CD4-positive, alpha-beta memory T cell (primary cell): ENCODE measurements at regions of chrX and their contacts with region 1.

Region 1: DNA sequence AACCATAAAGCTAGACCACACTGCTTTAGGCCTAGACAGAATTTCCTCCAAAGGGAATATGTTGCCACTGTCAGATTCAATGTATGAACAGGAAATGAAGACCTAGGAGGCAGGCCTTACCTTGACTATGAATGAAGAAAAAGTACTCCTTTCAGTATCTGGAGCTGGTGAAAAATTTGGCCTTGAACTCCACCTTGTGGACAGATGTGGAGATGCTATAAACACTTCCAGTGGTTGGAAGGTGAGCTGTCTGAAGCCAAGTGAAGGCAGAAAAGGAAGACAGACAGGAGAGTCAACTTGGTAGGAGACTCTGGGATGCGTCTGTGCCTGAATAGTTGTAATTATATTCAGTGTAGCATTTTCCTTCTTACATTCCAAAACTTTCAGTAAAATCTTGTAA is 17.2 kb downstream of the SPIN3 start:
- DNase-seq: peak; percentile 51 to 60 (median 59)
- H3K4me3 ChIP-seq: no peak overlapping the region
- H3K4me3 Mint-ChIP-seq: no peak overlapping the region
- H3K27ac ChIP-seq: no peak overlapping the region
- H3K27ac Mint-ChIP-seq: peak overlapping the region in 3 of 7 donors; percentile 16 to 67 (median 51)
- H3K4me1 ChIP-seq: no peaks in the 10 kb centered on the region
- H3K4me1 Mint-ChIP-seq: peaks cover 0 to 4% (median 1%) of the 10 kb centered on the region in 4 donors
- H3K27me3 ChIP-seq: no peaks in the 10 kb centered on the region
- H3K27me3 Mint-ChIP-seq: no peaks in the 10 kb centered on the region

Region 2: DNA sequence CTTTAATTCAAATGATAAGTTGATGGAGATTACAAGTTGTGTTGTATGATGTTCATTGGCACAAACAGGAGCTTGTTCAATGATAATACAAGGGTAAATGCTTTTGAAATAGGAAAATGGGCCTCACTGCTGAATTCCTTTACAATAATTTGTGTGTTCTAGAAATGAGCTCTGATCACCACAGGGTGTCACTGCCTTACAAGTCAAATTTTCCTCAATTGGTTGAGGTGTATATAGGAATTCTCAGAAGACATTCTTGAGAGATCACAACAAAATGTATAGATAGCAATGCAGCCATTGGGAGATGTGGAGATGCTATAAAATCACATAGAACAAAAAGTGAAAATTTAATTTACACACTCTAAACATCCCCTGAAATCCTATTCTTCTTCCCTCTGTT is 696.4 kb before region 1 on chrX:
- CTCF ChIA-PET with region 1: interaction called, 3 read pairs
- POLR2A ChIA-PET with region 1: no interaction called
- intact Hi-C with region 1: loop called (anchors 2 kb)
- DNase-seq: peak; percentile 32 to 54 (median 42)
- H3K4me3 ChIP-seq: no peak overlapping the region
- H3K4me3 Mint-ChIP-seq: no peak overlapping the region
- H3K27ac ChIP-seq: no peak overlapping the region
- H3K27ac Mint-ChIP-seq: no peak overlapping the region
- H3K4me1 ChIP-seq: peaks cover 7% of the 10 kb centered on the region
- H3K4me1 Mint-ChIP-seq: peaks cover 7 to 9% (median 8%) of the 10 kb centered on the region in 4 donors
- H3K27me3 ChIP-seq: no peaks in the 10 kb centered on the region
- H3K27me3 Mint-ChIP-seq: no peaks in the 10 kb centered on the region

Region 3: DNA sequence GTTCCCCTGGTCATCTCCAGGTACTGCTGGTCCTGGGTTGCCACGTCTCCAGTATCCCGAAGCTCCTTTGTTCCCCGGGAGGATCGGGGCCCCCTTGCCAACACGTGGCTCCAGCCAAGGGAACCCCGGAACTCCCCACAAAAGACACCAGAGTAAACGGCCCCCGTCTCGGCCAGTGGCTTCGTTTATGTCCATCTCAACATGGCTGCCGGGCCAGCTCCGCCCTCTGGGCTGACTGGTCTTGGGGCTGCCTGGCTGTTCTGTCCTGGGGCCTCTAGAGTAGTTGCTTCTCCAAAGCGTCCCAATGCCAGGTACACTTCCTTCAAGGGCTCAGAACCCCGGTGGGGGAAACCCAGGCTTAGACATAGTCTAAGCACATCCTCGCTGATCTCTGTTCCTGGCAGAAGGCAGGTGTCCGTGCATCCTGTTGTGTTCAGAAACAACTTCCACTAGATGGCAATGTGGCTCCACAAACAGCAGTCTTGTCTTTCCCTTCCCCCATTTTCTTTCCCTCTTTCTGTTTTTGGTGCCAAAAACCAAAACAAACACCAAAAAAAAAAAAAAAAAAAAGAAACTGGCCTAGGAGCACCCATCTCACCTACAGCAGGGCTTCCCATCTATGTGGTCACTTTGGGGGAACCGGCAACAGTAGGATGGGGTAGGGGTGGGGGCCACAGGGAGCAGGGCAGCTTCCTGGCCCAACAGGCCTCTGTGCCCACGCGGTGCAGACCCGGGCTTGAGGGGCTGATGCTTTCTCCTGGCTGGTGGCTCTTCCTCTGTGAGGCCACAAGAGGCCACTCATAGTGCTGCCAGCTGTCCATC is 213.8 kb before region 1 on chrX:
- CTCF ChIA-PET with region 1: interaction called, 13 read pairs
- POLR2A ChIA-PET with region 1: interaction called, 4 read pairs
- intact Hi-C with region 1: no loop called
- DNase-seq: peak; percentile 76 to 93 (median 91)
- H3K4me3 ChIP-seq: peak overlapping the region in 1 of 2 donors; percentile 35
- H3K4me3 Mint-ChIP-seq: peak overlapping the region; percentile 81 to 95 (median 92)
- H3K27ac ChIP-seq: peak overlapping the region; percentile 67
- H3K27ac Mint-ChIP-seq: peak overlapping the region; percentile 85 to 97 (median 93)
- H3K4me1 ChIP-seq: peaks cover 48% of the 10 kb centered on the region
- H3K4me1 Mint-ChIP-seq: peaks cover 40 to 60% (median 48%) of the 10 kb centered on the region in 4 donors
- H3K27me3 ChIP-seq: no peaks in the 10 kb centered on the region
- H3K27me3 Mint-ChIP-seq: no peaks in the 10 kb centered on the region

Region 4: DNA sequence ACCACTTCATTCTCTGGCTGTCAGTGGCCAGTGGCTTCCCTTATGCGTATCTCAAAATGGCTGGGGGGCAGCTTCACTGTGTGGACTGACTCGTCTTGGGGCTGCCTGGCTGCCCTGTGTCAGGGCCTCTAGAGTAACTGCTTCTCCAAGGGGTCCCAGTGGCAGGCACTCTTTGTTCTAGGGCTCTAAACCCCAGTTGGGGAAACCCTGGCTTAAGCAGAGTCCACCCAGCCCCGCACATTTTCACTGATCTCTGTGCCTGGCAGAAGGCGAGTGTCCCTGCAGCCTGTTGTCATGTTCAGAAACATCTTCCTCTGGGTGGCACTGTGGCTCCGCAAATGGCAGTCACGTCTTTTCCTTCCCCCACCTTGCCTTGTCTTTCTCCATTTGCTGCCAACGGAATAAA is 189.5 kb before region 1 on chrX:
- CTCF ChIA-PET with region 1: interaction called, 23 read pairs
- POLR2A ChIA-PET with region 1: no interaction called
- intact Hi-C with region 1: no loop called
- DNase-seq: peak in 3 of 5 donors; percentile 65 to 70 (median 65)
- H3K4me3 ChIP-seq: no peak overlapping the region
- H3K4me3 Mint-ChIP-seq: peak overlapping the region in 3 of 8 donors; percentile 18 to 61 (median 47)
- H3K27ac ChIP-seq: no peak overlapping the region
- H3K27ac Mint-ChIP-seq: peak overlapping the region in 3 of 7 donors; percentile 6 to 44 (median 39)
- H3K4me1 ChIP-seq: no peaks in the 10 kb centered on the region
- H3K4me1 Mint-ChIP-seq: peaks cover 8 to 48% (median 16%) of the 10 kb centered on the region in 4 donors
- H3K27me3 ChIP-seq: no peaks in the 10 kb centered on the region
- H3K27me3 Mint-ChIP-seq: no peaks in the 10 kb centered on the region

Region 5: DNA sequence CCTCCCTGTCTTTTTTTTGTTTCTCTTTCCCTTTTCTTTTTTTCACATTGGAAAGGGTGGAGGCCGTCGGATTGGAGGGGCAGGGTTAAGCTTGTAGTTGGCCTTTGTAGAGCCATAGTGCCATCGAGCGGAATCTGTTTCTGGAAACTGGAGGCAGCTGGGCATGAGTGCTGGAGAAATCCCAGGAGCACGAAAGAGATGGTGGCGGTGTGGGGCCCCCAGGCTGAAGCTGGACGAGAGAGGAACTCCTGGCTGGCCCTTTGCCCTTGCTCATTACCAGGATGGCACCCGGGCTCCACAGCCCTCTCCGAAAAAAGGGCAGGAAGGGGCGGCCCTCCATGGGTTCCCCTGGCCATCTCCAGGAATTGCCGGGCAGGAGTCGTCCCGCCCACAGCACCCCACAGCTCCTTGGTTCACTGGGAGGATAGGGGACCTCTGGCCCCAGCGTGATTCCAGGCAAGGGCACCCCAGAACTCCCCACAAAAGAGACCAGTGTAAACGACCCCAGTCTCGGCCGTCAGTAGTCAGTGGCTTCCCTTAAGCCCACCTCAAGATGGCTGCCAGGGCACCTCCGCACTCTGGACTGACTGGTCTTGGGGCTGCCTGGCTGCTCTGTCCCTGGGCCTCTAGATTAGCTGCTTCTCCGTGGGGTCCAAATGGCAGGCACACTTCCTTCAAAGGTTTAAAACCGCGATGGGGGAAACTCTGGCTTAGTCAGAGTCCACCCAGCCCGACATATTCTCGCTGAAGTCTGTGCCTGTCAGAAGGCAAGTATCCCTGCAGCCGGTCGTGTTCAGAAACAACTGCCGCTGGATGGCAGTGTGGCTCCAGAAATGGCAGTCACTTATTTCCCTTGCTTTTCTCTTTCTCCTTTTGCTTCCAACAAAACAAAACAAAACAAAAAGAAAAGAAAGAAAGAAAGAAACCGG is 175.0 kb before region 1 on chrX:
- CTCF ChIA-PET with region 1: interaction called, 21 read pairs
- POLR2A ChIA-PET with region 1: interaction called, 3 read pairs
- intact Hi-C with region 1: loop called (anchors 1 kb)
- DNase-seq: peak; percentile 46 to 79 (median 77)
- H3K4me3 ChIP-seq: no peak overlapping the region
- H3K4me3 Mint-ChIP-seq: peak overlapping the region; percentile 46 to 98 (median 96)
- H3K27ac ChIP-seq: no peak overlapping the region
- H3K27ac Mint-ChIP-seq: peak overlapping the region; percentile 63 to 94 (median 88)
- H3K4me1 ChIP-seq: peaks cover 43% of the 10 kb centered on the region
- H3K4me1 Mint-ChIP-seq: peaks cover 24 to 50% (median 33%) of the 10 kb centered on the region in 4 donors
- H3K27me3 ChIP-seq: no peaks in the 10 kb centered on the region
- H3K27me3 Mint-ChIP-seq: no peaks in the 10 kb centered on the region

Region 6: GRCh38 chrX:56947695-56948094 is 30.5 kb before region 1 on chrX:
- CTCF ChIA-PET with region 1: no interaction called
- POLR2A ChIA-PET with region 1: no interaction called
- intact Hi-C with region 1: no loop called
- DNase-seq: no peak
- H3K4me3 ChIP-seq: no peak overlapping the region
- H3K4me3 Mint-ChIP-seq: no peak overlapping the region
- H3K27ac ChIP-seq: no peak overlapping the region
- H3K27ac Mint-ChIP-seq: no peak overlapping the region
- H3K4me1 ChIP-seq: no peaks in the 10 kb centered on the region
- H3K4me1 Mint-ChIP-seq: no peaks in the 10 kb centered on the region
- H3K27me3 ChIP-seq: no peaks in the 10 kb centered on the region
- H3K27me3 Mint-ChIP-seq: no peaks in the 10 kb centered on the region